ENCODE measurements at regions of chr19 and their contacts with region 1.

Region 1: DNA sequence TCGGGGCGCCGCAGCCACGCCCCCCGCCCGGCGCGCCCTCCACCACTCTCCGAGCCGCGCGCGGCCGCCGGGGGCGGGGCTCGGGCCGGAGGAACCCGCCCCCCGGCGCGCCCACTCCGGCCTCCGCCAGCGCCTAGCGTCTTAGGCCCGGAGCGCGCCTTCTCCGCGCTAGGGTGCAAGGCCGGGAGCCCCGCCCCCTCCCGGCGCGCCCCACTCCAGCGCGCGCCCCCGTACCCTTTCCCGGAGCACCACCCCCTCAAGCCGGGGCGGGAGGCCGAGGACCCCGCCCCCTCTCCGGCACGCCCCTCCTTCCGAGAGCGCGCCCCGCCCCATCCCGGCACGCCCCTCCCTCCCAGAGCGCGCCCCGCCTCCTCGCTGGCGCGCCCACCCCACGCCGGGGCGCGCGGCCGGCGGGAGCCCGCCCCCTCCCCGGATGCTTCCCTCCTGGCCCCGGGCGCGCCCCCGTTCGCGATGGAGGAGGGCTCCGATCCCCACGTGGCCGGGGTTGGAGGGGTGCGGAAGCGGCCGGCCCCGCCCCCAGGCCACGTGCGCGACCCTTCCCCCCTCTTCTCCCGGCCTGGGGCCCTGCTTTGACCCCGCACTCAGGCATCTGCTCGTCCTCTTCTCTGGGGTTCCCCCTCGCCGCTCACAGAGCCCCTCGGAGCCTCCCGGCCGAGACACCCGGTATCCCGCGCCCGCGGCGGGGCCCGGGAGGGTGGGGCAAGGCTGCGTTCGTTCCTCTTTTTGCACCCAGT is 524 bp upstream of the KLF16 start:
- H3K4me3 Mint-ChIP-seq: peak overlapping the region; percentile 87
- H3K27ac Mint-ChIP-seq: peak overlapping the region; percentile 93
- H3K4me1 Mint-ChIP-seq: peaks cover 42% of the 10 kb centered on the region
- H3K27me3 Mint-ChIP-seq: no peaks in the 10 kb centered on the region

Region 2: DNA sequence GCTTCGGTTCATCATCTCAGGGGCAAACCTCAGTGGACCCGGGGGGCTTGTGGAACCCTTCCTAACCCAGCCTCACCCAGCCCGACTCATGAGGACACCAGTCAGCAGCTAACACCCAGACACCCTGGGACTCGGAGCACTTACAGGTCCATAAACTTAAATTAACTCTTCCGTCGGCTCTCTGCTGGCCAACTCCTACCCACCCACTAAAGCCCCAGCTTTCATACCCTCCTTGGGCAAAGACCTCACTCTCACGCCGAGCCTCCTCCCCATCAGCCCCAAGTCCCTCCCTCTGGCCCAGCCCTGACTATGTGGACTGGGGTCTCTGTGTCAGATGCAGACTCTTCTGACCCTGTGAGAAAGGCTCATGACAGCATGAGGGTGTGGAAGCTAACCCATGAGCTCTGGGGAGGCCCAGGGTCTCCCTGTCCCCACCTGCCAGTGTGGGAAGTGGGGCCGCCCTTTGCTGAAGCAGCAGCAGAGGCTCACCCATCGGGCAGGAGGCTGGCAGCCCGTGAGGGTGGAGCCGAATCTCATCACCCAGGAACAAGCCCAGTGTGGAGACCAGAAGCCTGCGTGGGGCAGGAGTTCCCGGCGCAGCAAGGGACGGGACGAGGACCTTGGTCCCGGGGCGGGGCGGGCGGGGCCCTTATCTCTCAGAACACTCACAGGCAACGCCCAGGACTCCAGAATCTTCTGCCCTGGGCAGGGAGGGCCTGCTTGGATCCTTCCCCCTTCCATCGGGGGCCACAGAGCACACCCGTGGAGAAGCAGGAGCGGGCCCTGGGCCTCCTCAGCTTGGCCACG is 231.2 kb before region 1 on chr19:
- intact Hi-C with region 1: no loop called
- H3K4me3 Mint-ChIP-seq: no peak overlapping the region
- H3K27ac Mint-ChIP-seq: no peak overlapping the region
- H3K4me1 Mint-ChIP-seq: peaks cover 11% of the 10 kb centered on the region
- H3K27me3 Mint-ChIP-seq: no peaks in the 10 kb centered on the region

Region 3: GRCh38 chr19:1754616-1755466 is 109.1 kb before region 1 on chr19:
- intact Hi-C with region 1: no loop called
- H3K4me3 Mint-ChIP-seq: no peak overlapping the region
- H3K27ac Mint-ChIP-seq: no peak overlapping the region
- H3K4me1 Mint-ChIP-seq: peaks cover 17% of the 10 kb centered on the region
- H3K27me3 Mint-ChIP-seq: peaks cover 85% of the 10 kb centered on the region

Region 4: DNA sequence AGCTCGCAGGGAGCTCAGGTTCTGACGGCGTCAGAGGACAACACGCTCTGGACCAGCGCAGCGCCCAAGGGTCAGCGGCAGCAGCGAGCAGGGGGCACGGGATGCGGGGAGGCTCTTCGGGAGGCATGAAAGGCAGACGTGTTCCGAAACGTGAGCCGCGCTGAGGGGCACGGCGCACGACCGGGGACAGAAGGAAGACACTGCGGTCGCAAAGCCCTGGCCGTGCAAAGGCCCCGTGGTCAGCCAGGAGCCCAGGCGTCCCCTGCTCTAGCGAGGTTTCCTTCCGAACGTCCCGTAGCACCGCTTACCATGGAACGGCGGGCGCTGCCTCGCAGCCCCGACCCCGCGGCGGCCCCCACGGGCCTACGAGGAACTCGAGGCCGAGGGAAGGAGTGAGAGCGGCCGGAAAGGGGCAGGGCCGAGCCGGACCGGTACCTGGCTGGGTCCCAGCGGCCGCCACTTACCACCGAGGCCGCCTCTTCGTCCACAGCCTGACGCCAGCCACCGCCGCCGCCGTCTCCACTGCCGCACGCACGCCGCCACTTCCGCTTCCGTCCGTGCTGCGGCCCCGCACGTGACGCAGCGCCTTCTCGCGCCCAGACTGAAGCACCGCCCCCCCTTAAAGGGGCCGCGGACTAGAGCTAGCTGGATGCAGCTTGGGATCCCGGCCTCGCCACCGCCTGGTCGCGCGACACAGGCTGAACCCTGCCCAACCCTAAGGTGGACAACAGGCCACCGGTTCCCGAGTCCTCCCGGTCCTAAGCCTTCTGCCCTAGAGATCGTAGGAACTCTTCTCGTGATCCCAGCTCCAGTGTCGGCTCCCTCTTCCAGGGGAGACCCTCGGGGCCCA is 12.0 kb after region 1 on chr19:
- intact Hi-C with region 1: loop called (anchors 1 kb)
- H3K4me3 Mint-ChIP-seq: peak overlapping the region; percentile 99
- H3K27ac Mint-ChIP-seq: peak overlapping the region; percentile 93
- H3K4me1 Mint-ChIP-seq: peaks cover 41% of the 10 kb centered on the region
- H3K27me3 Mint-ChIP-seq: no peaks in the 10 kb centered on the region

Region 5: GRCh38 chr19:1896508-1896907 is 32.6 kb after region 1 on chr19:
- intact Hi-C with region 1: loop called (anchors 5 kb)
- H3K4me3 Mint-ChIP-seq: peak overlapping the region; percentile 84
- H3K27ac Mint-ChIP-seq: peak overlapping the region; percentile 99
- H3K4me1 Mint-ChIP-seq: peaks cover 55% of the 10 kb centered on the region
- H3K27me3 Mint-ChIP-seq: no peaks in the 10 kb centered on the region

Region 6: GRCh38 chr19:1929021-1929742 is 65.3 kb after region 1 on chr19:
- intact Hi-C with region 1: no loop called
- H3K4me3 Mint-ChIP-seq: peak overlapping the region; percentile 74
- H3K27ac Mint-ChIP-seq: peak overlapping the region; percentile 82
- H3K4me1 Mint-ChIP-seq: peaks cover 37% of the 10 kb centered on the region
- H3K27me3 Mint-ChIP-seq: peaks cover 7% of the 10 kb centered on the region

Measured in dendritic cell treated with granulocyte-macrophage colony-stimulating factor and Interleukin-4, amounts not matched to agents 40 ng/mL and 50 ng/mL, for 4 days (primary cell).